Body of pancreas (tissue), 4 donors: ENCODE measurements at regions of chr17 and their contacts with region 1.

Region 1: GRCh38 chr17:37802712-37803416 is 58.0 kb upstream of the HNF1B start:
- DNase-seq: peak in 3 of 4 donors; percentile 17 to 55 (median 42)
- ATAC-seq: peak; percentile 75
- H3K4me3 ChIP-seq: no peak overlapping the region
- H3K27ac ChIP-seq: peak overlapping the region in 1 of 4 donors; percentile 19
- H3K4me1 ChIP-seq: no peaks in the 10 kb centered on the region
- H3K27me3 ChIP-seq: no peaks in the 10 kb centered on the region
- CTCF ChIP-seq: no peak
- POLR2A ChIP-seq: no peak

Region 2: DNA sequence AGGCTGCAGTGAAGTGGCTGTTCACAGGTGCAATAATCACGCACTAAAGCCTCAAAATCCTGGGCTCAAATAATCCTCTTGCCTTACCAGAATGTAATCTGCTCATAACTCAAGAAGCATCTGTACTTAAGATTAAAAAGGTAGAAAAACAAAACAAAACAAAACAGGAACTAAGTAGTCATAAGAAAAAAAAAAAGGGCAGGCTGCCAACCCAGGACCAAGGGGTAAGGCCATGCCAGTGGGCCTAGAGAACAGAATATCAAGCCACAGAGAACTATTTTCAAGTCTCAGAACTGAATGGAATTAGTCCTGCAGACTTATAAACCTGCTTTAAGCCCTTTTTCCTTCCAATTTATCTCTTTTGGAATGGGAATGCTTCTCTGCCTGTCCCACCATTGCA is 56.6 kb after region 1 on chr17:
- intact Hi-C with region 1: no loop called
- DNase-seq: no peak
- ATAC-seq: no peak
- H3K4me3 ChIP-seq: no peak overlapping the region
- H3K27ac ChIP-seq: no peak overlapping the region
- H3K4me1 ChIP-seq: no peaks in the 10 kb centered on the region
- H3K27me3 ChIP-seq: no peaks in the 10 kb centered on the region
- CTCF ChIP-seq: no peak
- POLR2A ChIP-seq: no peak

Region 3: DNA sequence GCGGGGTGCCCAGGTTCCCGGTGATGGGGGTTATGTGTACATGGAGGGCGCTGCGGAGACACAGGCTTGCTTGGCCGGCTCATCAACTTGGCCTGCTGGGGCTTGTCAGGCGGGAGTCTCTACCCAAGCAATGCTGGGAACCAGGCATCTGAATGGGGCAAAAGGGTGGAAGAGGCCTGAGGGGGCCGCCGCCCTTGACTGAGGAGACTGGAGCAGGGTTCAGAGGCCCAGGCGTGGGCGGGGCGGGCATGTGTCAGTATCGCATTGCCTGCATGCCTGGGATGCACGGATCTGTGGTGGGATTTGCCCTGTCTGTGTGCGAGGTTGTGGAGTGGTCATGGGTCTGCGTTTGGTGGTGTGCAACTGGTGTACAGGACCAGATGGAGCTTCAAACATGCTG is 646.5 kb after region 1 on chr17:
- intact Hi-C with region 1: loop called (anchors 5 kb)
- DNase-seq: no peak
- ATAC-seq: no peak
- H3K4me3 ChIP-seq: no peak overlapping the region
- H3K27ac ChIP-seq: no peak overlapping the region
- H3K4me1 ChIP-seq: no peaks in the 10 kb centered on the region
- H3K27me3 ChIP-seq: no peaks in the 10 kb centered on the region
- CTCF ChIP-seq: no peak
- POLR2A ChIP-seq: no peak